ENCODE measurements at regions of chr14 and their contacts with region 1.

Region 1: GRCh38 chr14:77301103-77301502 is 19.6 kb downstream of the POMT2 start:
- DNase-seq: peak; percentile 73
- ATAC-seq: peak; percentile 57
- H3K4me3 Mint-ChIP-seq: no peak overlapping the region
- H3K27ac Mint-ChIP-seq: no peak overlapping the region
- H3K4me1 Mint-ChIP-seq: peaks cover 15% of the 10 kb centered on the region
- H3K27me3 Mint-ChIP-seq: no peaks in the 10 kb centered on the region

Region 2: DNA sequence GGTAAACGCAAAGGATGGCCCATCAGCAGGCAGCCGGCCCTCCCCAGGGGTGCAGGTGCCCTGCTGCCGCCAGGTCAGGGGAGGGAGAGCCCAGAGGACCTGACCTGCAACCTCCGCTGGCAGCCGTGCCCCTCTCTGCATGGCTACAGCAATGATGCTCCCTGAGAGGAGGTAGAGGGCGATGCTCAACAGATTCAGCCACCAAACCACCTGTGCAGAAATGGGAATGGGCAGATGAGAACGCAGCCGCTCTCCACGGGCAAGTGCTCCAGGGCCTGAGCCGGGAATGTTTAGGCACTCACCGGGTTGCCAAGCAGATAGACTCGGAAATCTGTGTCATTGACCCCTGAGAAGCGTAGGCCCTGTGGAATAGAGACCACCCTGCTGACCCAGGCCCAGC is 21.4 kb before region 1 on chr14:
- CTCF ChIA-PET with region 1: no interaction called
- POLR2A ChIA-PET with region 1: no interaction called
- DNase-seq: no peak
- ATAC-seq: no peak
- H3K4me3 Mint-ChIP-seq: no peak overlapping the region
- H3K27ac Mint-ChIP-seq: no peak overlapping the region
- H3K4me1 Mint-ChIP-seq: no peaks in the 10 kb centered on the region
- H3K27me3 Mint-ChIP-seq: no peaks in the 10 kb centered on the region

Region 3: DNA sequence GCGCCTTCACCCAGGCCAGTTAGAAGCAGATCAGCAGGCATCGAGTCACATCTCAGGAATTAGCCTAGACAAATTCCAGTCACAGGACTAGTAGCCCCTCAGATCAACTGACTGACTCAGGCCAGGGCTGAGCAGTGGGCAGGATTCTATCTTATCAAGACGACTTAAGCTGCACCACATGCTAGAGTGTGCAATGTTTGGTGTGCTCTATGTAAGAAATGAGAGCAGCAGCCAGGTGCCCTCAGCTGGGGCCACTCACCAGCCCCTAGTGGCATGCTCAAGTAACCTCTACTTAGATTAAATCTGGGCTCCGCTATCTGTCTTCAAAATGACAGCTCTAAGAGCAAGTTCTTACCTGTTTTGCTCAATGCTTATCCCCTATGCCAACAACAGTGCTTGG is 10.4 kb before region 1 on chr14:
- CTCF ChIA-PET with region 1: interaction called, 10 read pairs
- POLR2A ChIA-PET with region 1: no interaction called
- DNase-seq: no peak
- ATAC-seq: no peak
- H3K4me3 Mint-ChIP-seq: no peak overlapping the region
- H3K27ac Mint-ChIP-seq: no peak overlapping the region
- H3K4me1 Mint-ChIP-seq: no peaks in the 10 kb centered on the region
- H3K27me3 Mint-ChIP-seq: no peaks in the 10 kb centered on the region

Region 4: GRCh38 chr14:77320238-77320935 is 19.3 kb after region 1 on chr14 and contains the start of gene POMT2:
- CTCF ChIA-PET with region 1: interaction called, 214 read pairs
- POLR2A ChIA-PET with region 1: interaction called, 10 read pairs
- DNase-seq: peak; percentile 94
- ATAC-seq: peak; percentile 61
- H3K4me3 Mint-ChIP-seq: peak within 1 kb of the TSS; percentile 93
- H3K27ac Mint-ChIP-seq: peak within 1 kb of the TSS; percentile 100
- H3K4me1 Mint-ChIP-seq: peaks cover 23% of the 10 kb centered on the region
- H3K27me3 Mint-ChIP-seq: no peaks in the 10 kb centered on the region
- total RNA-seq, gene POMT2: 15.0 to 15.5 TPM

Measured in activated CD8-positive, alpha-beta T cell treated with anti-CD3 and anti-CD28 coated beads, Interleukin-2, amount 10 ng/mL, durations not matched to agents 7 days and 5 days (primary cell).